Sciatic nerve (tissue), 2 donors: ENCODE measurements at regions of chr10 and their contacts with region 1.

Region 1: DNA sequence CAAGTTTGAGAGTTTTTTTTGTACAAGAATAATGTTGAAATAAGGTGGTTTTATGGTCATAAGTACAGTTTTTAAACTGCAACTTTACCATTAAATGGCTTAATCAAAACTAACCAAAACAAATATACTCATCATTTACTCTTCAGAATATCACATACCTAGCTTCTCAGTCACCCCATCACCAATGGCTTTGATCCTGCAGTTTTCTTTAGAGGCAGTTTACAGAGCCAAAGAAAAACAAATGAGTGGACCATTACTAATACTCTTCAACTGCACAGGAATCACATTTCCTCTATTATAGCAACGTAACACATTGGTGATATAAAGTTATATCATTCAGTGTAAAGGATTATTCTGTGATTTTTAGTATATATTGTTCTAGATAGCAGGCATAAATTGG is 576.1 kb upstream of the LRRTM3 start:
- DNase-seq: no peak
- ATAC-seq: no peak

Region 2: GRCh38 chr10:66329147-66329546 is 20.6 kb before region 1 on chr10:
- intact Hi-C with region 1: loop called (anchors 1 kb)
- DNase-seq: no peak
- ATAC-seq: no peak

Region 3: GRCh38 chr10:66505003-66505657 is 155.4 kb after region 1 on chr10:
- intact Hi-C with region 1: no loop called
- DNase-seq: no peak
- ATAC-seq: no peak